Cardiac septum (tissue), 1 donor: ENCODE measurements at regions of chr1 and their contacts with region 1.

Region 1: DNA sequence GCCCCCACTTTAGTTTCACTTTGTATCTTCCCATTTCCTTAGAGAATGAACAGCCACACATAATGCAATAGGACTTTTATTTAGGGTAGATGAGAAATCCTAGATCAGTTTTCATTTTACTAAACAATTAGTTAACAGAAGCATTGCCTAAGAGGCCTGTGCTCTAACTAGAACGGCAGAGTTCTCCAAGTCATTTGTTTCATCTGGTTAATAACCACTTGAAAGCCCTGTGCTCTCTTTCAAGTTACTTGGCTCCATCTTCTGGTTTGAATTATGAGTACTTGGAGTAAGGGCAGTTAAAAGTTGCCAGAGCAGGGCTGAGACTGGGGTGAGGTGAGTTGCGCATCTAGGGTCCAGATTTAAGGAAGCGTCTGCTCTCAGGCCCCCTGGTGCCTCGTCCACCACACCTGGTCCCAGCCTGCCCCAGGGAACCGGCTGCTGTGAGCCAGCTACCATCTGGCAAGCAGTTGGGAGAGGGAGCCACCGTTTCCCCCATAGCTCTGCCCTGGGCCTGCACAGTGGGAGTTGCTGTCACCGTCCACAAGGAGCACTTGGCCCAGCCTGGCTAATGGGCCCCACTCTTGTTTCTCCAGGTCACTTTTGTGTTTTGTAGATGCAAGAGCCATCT is 18.1 kb upstream of the SLC44A3 start:
- DNase-seq: no peak

Region 2: GRCh38 chr1:94325379-94326302 is 476.4 kb before region 1 on chr1:
- intact Hi-C with region 1: no loop called
- DNase-seq: no peak

Region 3: GRCh38 chr1:94481473-94481933 is 320.5 kb before region 1 on chr1:
- intact Hi-C with region 1: loop called (anchors 1 kb)
- DNase-seq: no peak

Region 4: GRCh38 chr1:94522304-94522703 is 279.7 kb before region 1 on chr1:
- intact Hi-C with region 1: loop called (anchors 2 kb)
- DNase-seq: no peak

Region 5: DNA sequence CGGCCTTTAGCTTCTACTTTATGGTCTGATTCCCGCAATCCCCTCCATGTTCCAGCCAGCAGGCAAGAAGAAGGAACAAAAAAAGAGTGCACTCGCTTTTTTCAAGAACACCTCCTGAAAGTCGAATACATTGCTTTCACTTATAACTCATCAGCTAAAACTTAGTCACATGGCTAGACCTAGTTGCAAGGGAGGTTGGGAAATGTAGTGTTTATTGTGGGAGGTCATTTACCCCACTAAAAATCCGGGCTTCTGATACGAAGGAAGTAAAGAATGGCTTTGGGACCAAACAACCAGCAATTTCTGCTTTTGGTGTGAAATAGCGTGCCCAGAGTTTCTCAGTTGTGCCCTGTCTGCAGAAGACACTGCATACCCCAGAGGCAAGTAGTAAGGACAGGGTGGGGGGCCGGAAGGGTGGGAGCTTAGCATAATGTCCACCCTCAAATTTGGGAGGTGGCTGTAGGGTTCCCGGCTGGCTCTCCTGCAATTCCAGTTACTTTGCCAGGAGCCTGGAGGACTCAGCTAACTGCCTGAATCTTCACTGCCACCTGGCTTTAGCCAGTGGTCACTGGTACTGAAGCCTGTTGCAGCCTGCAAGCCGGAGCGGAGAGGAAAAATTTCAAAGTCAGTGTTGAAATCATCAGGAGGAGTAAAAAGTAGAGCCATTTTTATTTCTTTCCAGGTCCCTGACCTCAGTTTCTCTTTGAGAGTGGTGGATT is 202.8 kb before region 1 on chr1:
- intact Hi-C with region 1: loop called (anchors 5 kb)
- DNase-seq: no peak

Region 6: GRCh38 chr1:94658221-94658620 is 143.8 kb before region 1 on chr1:
- intact Hi-C with region 1: loop called (anchors 2 kb)
- DNase-seq: no peak

Region 7: GRCh38 chr1:94734963-94735899 is 66.8 kb before region 1 on chr1:
- intact Hi-C with region 1: loop called (anchors 5 kb)
- DNase-seq: no peak

Region 8: DNA sequence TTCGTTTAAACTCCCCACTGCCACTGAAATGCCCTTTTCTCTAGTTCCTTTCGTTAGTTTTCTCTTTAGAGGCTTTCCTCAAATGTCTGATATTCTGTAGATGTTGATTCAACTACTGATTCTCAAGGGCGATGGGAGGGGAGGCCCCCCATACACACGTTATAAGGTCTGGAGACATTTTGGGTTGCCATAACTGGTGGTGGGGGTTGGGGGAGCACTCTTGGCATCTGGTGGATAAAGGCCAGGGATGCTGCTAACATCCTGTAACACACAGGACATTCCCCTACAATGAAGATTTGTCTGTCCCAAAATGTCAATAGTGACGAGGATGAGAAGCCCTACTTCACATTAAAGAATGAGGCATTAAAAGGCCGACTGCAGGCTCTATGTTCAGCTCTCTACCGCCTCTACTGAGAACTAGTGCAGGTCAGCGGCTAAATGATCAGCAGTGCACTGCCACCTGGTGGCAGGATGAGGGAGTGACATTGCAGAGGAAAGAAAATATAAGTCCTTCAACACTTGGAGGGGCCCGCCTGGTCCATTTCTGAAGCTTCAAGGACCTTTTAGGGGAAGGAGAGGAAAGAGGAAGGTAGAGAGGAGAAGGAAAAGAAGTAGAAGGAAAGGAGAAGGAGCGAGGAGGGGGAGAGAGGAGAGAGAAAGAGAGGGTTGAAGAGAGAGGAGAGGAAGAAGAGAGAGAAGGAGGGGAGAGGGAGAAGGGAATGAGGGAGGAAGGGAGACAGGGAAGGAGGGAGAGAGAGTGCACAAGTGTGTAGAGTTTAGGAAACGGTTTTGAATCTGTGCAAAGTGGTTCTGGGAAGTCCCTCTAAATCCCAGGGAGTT is 241.3 kb after region 1 on chr1:
- intact Hi-C with region 1: loop called (anchors 5 kb)
- DNase-seq: peak; percentile 91